ENCODE measurements at regions of chr2 and their contacts with region 1.

Region 1: DNA sequence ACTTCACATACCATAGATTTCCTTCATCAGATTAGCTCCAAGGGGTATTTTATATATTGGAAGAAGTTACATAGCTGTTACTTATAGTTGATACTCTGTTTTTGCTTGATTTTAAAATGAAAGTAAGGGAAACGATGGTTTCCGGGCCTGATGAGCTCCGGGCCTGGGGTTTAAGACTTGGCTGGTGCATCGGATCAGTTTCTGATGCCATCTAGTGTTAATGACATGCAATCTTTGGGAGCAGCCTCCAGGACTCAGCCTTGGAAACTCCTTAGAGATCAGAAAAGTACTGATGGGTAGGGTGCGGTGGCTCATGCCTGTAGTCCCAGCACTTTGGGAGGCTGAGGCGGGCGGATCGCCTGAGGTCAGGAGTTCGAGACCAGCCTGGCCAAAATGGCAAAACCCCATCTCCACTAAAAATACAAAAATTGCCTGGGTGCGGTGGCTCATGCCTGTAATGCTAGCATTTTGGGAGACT is 47.1 kb upstream of the CNOT11 start:
- DNase-seq: peak; percentile 49 to 75
- H3K4me3 ChIP-seq: peak overlapping the region; percentile 48; the same call in 1 of the 2 replicates
- H3K27ac ChIP-seq: peak overlapping the region; percentile 28; the same call in 1 of the 2 replicates
- H3K4me1 ChIP-seq: peaks cover 5% of the 10 kb centered on the region; the same call in 1 of the 2 replicates
- H3K27me3 ChIP-seq: no peaks in the 10 kb centered on the region
- CTCF ChIP-seq: peak; percentile 59

Region 2: GRCh38 chr2:101012706-101013181 is 192.8 kb before region 1 on chr2:
- CTCF ChIA-PET with region 1: interaction called, 8 read pairs
- POLR2A ChIA-PET with region 1: interaction called, 4 read pairs
- intact Hi-C with region 1: loop called (anchors 1 kb)
- DNase-seq: peak; percentile 19 to 39
- H3K4me3 ChIP-seq: no peak overlapping the region
- H3K27ac ChIP-seq: no peak overlapping the region; the same call in 1 of the 2 replicates
- H3K4me1 ChIP-seq: no peaks in the 10 kb centered on the region
- H3K27me3 ChIP-seq: no peaks in the 10 kb centered on the region
- CTCF ChIP-seq: peak; percentile 91

Region 3: GRCh38 chr2:101036562-101037457 is 168.8 kb before region 1 on chr2:
- CTCF ChIA-PET with region 1: interaction called, 11 read pairs
- POLR2A ChIA-PET with region 1: no interaction called
- intact Hi-C with region 1: loop called (anchors 1 kb)
- DNase-seq: no peak
- H3K4me3 ChIP-seq: no peak overlapping the region
- H3K27ac ChIP-seq: no peak overlapping the region
- H3K4me1 ChIP-seq: no peaks in the 10 kb centered on the region
- H3K27me3 ChIP-seq: no peaks in the 10 kb centered on the region
- CTCF ChIP-seq: peak; percentile 71

Region 4: GRCh38 chr2:101113396-101114267 is 91.9 kb before region 1 on chr2:
- CTCF ChIA-PET with region 1: interaction called, 3 read pairs
- POLR2A ChIA-PET with region 1: interaction called, 13 read pairs
- intact Hi-C with region 1: no loop called
- DNase-seq: peak; percentile 69 to 92
- H3K4me3 ChIP-seq: peak overlapping the region; percentile 43; the same call in 1 of the 2 replicates
- H3K27ac ChIP-seq: peak overlapping the region; percentile 88
- H3K4me1 ChIP-seq: peaks cover 80% of the 10 kb centered on the region
- H3K27me3 ChIP-seq: no peaks in the 10 kb centered on the region
- CTCF ChIP-seq: no peak

Region 5: DNA sequence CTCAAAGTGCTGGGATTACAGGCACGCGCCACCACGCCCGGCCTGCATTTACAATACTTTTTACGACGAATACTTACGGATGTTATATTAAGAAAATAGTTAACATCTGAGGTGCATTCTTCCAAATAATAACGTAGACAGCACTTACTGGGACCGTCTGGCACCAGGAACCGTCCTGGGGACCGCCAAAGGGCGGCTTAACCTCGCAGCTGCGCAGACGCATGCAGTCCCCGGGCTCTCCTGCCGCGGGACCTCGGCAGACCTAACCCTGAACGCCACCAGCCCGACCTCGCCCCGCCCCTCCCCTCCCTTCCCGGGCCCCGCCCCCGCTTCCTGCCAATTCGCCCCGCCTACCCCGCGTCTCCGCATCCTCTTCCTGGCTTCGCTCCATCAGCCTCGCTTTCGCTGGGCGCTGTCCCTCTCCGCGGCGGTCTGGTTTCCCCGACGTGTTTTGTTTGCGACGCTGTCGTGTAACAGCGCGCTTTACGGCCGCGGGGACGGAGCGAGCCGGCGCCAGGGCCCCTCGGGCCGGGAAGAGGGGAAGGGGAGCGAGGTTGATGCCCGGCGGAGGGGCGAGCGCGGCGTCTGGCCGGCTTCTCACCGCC is 47.0 kb after region 1 on chr2 and contains the start of gene CNOT11:
- CTCF ChIA-PET with region 1: no interaction called
- POLR2A ChIA-PET with region 1: no interaction called
- intact Hi-C with region 1: loop called (anchors 5 kb)
- DNase-seq: peak; percentile 91 to 97
- H3K4me3 ChIP-seq: peak within 1 kb of the TSS; percentile 66
- H3K27ac ChIP-seq: peak within 1 kb of the TSS; percentile 71
- H3K4me1 ChIP-seq: peaks cover 33% of the 10 kb centered on the region
- H3K27me3 ChIP-seq: no peaks in the 10 kb centered on the region
- CTCF ChIP-seq: no peak
- total RNA-seq, gene CNOT11: 39.0 and 60.6 TPM in 2 replicates